ENCODE measurements at regions of chr1 and their contacts with region 1.

Region 1: DNA sequence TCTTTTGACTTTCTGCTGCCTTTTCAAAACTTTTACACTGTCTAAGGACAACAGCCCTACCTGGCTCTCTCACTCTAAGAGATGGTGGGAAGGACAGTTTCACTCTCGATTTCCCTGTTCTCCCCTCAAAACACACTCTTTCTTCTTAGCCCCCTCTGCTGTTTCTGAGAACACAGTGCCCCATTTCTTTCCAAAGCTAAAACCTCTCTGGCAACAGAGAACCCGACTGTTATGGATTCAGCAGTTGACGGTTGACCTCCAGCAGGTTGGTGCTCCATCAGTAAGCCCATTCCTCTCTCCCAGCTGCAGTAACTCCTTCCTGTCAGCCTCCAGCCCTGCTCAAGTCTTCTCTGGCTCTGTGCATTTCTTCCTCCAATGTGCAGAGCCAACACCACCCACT is 88.2 kb upstream of the ABCD3 start:
- DNase-seq: no peak
- ATAC-seq: peak; percentile 7 to 46

Region 2: DNA sequence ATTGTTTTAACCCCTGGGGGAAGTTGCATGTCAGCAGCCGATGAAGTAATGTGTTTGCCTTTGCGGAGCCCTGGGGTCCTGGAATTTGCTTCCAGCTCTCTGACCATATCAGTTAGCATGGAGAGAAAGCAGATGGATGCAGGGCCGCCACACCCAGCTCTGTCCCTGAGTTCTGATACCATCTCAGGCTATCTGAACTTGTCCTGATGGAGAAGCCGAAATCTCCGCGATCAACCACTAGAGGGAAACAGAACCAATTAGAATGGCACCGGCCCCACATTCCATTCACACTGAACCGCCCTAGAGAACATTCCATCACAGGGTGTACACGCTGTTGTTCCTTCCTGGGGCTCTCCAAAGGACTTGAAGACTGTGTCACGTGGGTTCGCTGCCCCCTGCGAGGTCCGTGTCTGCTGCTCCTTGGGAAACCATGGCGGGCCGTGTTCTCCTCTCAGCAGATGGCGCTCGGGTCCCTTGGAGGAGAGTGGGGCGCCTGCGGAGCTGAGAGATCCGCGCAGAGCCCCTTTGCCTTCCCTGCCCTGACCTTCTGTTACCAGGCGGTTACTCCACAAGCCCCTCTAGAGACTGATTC is 284.4 kb before region 1 on chr1:
- intact Hi-C with region 1: loop called (anchors 2 to 5 kb)
- DNase-seq: peak; percentile 92
- ATAC-seq: peak; percentile 89 to 94

Region 3: DNA sequence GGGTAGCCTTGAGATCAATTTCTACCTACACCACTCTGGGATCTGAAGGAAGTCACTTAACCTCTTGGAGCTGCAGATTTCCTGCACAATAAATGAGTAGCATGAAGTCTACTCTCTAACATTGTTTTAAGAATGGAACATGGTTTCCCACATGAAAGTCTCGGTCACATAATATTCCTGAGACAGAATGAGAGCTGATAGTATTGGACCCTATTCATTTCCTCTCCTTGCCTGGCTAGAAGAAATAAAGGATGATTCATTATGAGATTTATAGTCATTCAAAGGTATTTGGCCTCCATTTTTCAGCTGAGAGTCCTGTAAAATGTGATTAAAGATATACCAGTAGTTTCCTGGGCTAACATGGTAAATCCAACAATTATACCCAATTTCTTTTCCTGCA is 149.3 kb before region 1 on chr1:
- intact Hi-C with region 1: no loop called
- DNase-seq: no peak
- ATAC-seq: no peak

Region 4: GRCh38 chr1:94237291-94238226 is 92.4 kb before region 1 on chr1 and contains the start of gene ARHGAP29:
- intact Hi-C with region 1: loop called (anchors 5 to 10 kb)
- DNase-seq: peak; percentile 89
- ATAC-seq: peak; percentile 97 to 98
- total RNA-seq, gene ARHGAP29: 29.4 to 38.9 TPM

Region 5: DNA sequence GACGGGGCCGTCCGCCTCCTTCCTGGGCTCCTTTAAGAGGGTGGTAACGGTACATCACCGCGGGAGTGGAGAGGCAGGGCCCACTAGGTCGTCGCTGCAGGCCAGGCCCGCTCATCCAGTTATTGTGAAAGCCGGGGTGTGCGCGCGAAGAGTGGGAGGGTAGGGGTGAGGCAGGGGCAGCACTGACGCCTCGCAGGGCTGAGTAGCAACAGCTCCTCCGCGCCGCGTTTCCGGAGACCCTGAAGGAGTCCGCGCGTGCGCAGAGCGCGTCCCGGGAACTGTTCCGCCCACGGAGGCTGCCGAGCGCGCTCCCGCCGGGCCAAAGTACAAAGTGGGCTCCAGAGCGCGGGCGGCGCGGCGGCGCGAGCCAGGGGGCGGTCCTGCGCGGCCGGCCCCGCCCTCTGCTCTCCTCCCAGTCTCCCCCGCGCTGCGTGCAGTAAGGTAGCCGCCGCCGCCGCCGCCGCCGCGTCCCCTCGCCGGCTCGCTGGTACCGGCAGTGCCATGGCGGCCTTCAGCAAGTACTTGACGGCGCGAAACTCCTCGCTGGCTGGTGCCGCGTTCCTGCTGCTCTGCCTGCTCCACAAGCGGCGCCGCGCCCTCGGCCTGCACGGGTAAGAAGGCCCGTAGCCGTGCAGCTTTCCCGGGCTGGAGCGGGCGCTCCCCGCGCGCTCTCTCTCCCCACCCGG is 88.1 kb after region 1 on chr1 and contains the start of gene ABCD3:
- intact Hi-C with region 1: no loop called
- DNase-seq: peak; percentile 98
- ATAC-seq: peak; percentile 98 to 99
- total RNA-seq, gene ABCD3: 53.3 to 105 TPM

Measured in left cardiac atrium (tissue), 4 donors.